ENCODE measurements at regions of chr4 and their contacts with region 1.

Region 1: DNA sequence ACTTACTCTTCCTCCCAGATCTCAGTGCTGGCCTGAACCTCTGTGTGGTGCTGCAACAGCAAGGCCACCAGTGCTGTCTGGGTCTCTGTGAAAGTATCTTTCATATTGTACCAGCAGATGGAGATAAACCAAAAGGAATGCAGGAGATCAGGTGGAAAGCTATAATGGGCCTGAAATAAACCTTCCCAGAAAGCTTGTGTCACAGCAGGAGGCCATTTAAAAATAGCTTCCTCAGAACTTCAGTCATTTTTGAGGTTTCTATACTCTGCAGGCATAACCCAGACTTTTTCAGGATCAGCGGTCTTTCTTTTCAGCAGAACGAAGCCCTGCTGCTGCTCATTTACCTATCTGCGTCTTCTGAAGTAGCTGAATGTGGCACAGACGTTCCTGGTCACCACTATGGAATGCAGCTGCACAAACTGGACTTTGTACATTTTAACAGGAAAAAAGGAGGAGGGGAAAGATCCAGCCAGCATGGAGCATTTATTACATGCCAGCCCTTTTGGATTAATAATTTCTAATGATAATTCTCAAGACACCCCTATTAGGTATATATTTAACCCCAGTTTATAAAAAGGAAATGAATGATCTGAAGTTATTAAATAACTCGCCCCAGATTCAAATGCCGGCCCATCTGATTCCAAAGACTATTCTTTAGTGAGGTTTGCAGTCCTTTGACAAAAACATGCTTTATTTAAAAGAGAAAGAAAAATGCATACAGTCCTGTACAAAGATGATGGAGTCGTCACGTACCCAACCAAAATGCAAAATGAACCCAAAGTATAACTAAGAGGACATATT is 119.7 kb downstream of the NFKB1 start:
- DNase-seq: peak; percentile 31 to 55
- ATAC-seq: peak; percentile 93

Region 2: GRCh38 chr4:103008875-103009729 is 388.2 kb after region 1 on chr4:
- intact Hi-C with region 1: loop called (anchors 5 to 10 kb)
- DNase-seq: no peak
- ATAC-seq: peak; percentile 72

Region 3: GRCh38 chr4:103019308-103020124 is 398.6 kb after region 1 on chr4 and contains the start of gene SLC9B1:
- intact Hi-C with region 1: loop called (anchors 5 to 10 kb)
- DNase-seq: peak; percentile 97 to 98
- ATAC-seq: peak; percentile 100
- total RNA-seq, gene SLC9B1: 0.39 to 0.46 TPM

Region 4: GRCh38 chr4:103099691-103100392 is 478.9 kb after region 1 on chr4 and contains the start of gene BDH2:
- intact Hi-C with region 1: loop called in 1 of 2 experiments (anchors 10 kb)
- DNase-seq: peak; percentile 24 to 39
- ATAC-seq: peak; percentile 96
- total RNA-seq, gene BDH2: 28.6 to 35.4 TPM

Measured in left colon (tissue), 2 donors.